ENCODE measurements at regions of chr4 and their contacts with region 1.

Region 1: DNA sequence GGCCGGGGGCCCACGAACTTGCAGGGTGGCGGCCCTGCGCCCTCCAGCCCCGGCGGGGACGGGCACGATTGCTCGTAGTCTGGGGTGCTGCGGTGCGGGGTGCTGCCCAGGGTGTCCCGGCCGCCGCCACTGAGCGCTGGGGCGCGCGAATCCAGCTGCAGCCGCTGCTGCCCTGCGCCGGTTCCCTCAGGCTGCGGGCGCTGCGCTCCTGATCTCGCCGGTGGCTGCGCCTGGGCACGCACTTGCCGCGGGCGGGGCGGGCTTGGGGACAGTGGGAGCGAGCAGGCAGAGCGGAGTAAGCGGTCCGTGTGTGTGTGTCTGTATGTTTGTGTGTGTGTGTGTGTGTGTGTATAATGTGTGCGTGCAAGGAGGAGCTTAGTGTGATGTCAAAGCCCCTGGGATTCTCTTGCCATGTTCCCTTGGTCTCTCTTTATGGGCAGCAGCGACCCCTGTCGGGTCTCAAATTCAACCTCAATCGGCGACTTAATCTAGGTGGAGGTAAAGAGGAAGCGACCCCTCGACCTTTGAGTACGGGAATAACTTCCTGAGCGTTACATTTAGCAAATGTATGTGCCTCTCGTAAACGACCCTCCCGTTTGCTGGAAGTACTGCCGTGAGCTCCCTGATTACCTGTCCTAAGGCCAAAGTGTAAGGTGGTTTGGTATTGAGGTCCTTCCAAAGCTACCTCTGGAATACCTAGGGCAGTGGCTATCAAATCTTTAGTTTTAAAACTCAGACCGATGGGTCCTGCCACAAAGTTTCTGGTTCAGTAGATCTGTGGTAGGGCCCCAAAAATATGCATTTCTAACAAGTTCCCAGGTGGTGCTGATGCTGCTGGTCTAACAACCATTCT is at the start of gene RNF150:
- DNase-seq: peak; percentile 0
- H3K4me3 ChIP-seq: peak within 1 kb of the TSS; percentile 60 to 79 (median 73)
- H3K27ac ChIP-seq: peak within 1 kb of the TSS; percentile 63 to 89 (median 76)
- H3K4me1 ChIP-seq: peaks cover 0 to 50% (median 7%) of the 10 kb centered on the region in 3 donors
- H3K27me3 ChIP-seq: peaks cover 0 to 68% (median 0%) of the 10 kb centered on the region in 4 donors
- CTCF ChIP-seq: peak in 4 of 6 experiments; percentile 42 to 56 (median 50)
- POLR2A ChIP-seq: peak in 1 of 4 donors; percentile 16
- total RNA-seq, gene RNF150: 0.23 to 6.7 (median 4.5) TPM

Region 2: DNA sequence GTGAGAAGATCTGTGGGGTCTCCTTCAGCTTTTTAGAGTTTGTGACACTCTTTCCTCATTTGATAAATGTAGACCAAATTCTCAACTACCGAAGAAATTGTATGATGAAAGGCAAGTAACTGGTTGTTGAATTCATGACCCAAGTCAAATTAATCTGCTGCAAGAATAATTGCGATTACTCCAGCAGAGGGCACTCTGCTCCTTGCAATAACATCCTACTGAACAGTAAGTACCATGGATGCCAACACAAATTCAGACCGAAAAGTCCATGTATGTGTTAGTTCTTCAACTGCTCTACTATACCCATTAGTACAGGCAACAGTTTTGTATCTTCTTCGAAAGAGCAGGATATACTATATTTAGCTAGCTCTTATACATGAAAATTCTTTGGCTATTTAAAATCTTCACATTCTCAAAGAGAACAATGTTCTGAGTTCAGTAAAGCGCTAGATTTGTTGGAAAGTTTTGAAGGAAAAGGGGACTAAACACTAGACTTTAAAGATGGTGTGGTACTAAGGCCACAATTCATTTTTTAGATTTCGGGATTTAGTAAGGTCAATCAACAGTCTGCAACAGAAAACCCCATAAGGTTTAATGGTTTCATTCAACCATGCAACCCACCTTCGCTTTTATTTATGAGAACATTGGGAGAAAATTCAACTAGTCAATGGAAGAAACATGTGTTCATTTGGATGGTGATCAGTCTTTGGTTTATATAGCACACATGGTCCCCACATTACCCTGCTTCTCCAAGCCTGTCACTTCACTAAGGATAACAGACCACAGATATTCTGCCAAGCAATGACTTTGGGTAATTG is 271.8 kb before region 1 on chr4:
- intact Hi-C with region 1: loop called (anchors 10 kb)
- DNase-seq: no peak
- H3K4me3 ChIP-seq: no peak overlapping the region
- H3K27ac ChIP-seq: no peak overlapping the region
- H3K4me1 ChIP-seq: peaks cover 0 to 11% (median 4%) of the 10 kb centered on the region in 3 donors
- H3K27me3 ChIP-seq: no peaks in the 10 kb centered on the region
- CTCF ChIP-seq: peak; percentile 67 to 82 (median 72)
- POLR2A ChIP-seq: no peak

Measured in esophagus squamous epithelium (tissue), 5 donors.